A549 (cell line): ENCODE measurements at regions of chr15 and their contacts with region 1.

Region 1: GRCh38 chr15:72685301-72685924 is 569 bp downstream of the HIGD2B start:
- DNase-seq: peak in 1 of 2 experiments; percentile 26
- ATAC-seq: peak; percentile 12 to 20
- H3K4me3 ChIP-seq: peak overlapping the region; percentile 67
- H3K27ac ChIP-seq: peak overlapping the region; percentile 88 to 89
- H3K4me1 ChIP-seq: peaks cover 8% of the 10 kb centered on the region; the same call in 1 of the 3 replicates
- CTCF ChIP-seq: no peak
- EP300 ChIP-seq: no peak
- POLR2A ChIP-seq: no peak
- RAD21 ChIP-seq: no peak

Region 2: GRCh38 chr15:72671535-72671934 is 13.9 kb before region 1 on chr15:
- CTCF ChIA-PET with region 1: interaction called, 22 read pairs
- POLR2A ChIA-PET with region 1: interaction called, 7 read pairs
- DNase-seq: no peak
- ATAC-seq: no peak
- H3K4me3 ChIP-seq: no peak overlapping the region
- H3K27ac ChIP-seq: no peak overlapping the region; a peak in 1 of 6 replicates
- H3K4me1 ChIP-seq: peaks cover 6% of the 10 kb centered on the region
- CTCF ChIP-seq: no peak
- EP300 ChIP-seq: no peak
- POLR2A ChIP-seq: no peak
- RAD21 ChIP-seq: no peak